Astrocyte of the cerebellum (primary cell): ENCODE measurements at regions of chr16 and their contacts with region 1.

Region 1: GRCh38 chr16:86951831-86952598 is 365.2 kb downstream of the C16orf95 start:
- DNase-seq: peak; percentile 92
- H3K4me3 ChIP-seq: no peak overlapping the region
- CTCF ChIP-seq: no peak

Region 2: DNA sequence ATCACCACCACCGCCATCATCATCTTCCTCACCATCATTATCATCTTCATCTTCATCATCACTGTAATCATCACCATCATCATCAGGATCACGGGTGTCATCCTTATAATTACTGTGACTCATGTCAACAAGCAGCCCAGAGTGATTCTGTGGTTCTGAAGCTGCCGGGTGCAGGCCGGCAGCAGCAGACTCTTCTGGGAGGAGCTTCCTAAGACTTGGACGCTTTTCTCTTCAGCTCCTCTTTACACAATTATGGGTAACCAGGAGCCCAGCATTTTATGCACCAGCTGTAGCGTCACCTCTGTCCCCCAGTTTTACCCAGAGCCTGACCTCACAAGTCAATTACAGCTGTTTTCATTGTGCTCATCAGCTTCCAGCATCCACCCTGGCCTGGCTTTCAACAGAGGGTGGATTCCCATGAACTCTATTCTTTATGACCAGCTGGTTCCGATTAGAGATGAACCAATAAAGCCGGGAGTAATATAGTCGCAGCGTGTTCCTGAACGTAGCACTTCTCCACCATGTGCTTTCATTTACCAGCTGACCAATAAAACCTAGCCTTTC is 97.9 kb before region 1 on chr16:
- in situ Hi-C with region 1: loop called (anchors 5 kb)
- DNase-seq: no peak
- H3K4me3 ChIP-seq: no peak overlapping the region
- CTCF ChIP-seq: no peak